Adrenal gland (tissue), 19 donors: ENCODE measurements at regions of chr20 and their contacts with region 1.

Region 1: DNA sequence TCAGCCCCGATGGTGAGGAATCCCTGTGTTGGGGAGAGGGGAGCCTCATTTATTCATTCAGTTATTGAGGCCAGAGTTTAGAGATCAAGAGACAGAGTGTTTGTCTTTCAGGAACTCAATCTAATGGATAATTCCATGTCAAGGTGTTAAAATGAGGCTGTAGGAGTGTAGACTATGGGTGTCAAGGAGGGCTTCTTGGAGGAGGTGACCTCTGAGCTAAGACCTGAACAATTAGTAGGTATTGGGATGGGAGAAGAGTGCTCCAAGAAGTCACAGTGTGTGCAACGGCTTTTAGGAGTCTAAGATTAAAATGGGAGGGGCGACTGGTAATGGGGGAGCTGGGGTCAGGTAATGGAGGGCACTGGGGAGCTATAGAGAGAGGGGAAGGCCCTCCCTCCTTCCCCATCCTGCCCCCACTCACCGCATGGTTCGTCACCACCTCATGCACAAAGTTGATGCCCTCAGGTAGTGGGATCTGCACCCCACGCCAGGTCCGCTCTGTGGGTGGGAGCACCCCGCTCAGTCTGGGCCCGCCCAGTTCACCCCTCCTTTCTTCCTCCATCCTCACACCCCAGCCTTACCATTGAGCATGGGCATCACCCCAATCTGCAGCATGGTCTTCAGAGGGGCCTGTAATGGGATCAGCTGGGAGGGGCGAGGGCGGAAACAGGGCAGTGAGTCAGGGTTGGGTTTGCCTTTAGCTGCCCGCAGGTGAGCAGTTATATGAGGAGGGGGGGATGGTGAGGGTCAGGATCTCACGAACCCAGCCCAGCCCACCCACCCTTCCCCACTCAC is 8.1 kb downstream of the CTSA start:
- DNase-seq: no peak
- H3K4me3 ChIP-seq: no peak overlapping the region
- H3K27ac ChIP-seq: no peak overlapping the region
- H3K4me1 ChIP-seq: peaks cover 0 to 5% of the 10 kb centered on the region in 2 donors
- H3K27me3 ChIP-seq: no peaks in the 10 kb centered on the region
- CTCF ChIP-seq: no peak
- POLR2A ChIP-seq: no peak

Region 2: DNA sequence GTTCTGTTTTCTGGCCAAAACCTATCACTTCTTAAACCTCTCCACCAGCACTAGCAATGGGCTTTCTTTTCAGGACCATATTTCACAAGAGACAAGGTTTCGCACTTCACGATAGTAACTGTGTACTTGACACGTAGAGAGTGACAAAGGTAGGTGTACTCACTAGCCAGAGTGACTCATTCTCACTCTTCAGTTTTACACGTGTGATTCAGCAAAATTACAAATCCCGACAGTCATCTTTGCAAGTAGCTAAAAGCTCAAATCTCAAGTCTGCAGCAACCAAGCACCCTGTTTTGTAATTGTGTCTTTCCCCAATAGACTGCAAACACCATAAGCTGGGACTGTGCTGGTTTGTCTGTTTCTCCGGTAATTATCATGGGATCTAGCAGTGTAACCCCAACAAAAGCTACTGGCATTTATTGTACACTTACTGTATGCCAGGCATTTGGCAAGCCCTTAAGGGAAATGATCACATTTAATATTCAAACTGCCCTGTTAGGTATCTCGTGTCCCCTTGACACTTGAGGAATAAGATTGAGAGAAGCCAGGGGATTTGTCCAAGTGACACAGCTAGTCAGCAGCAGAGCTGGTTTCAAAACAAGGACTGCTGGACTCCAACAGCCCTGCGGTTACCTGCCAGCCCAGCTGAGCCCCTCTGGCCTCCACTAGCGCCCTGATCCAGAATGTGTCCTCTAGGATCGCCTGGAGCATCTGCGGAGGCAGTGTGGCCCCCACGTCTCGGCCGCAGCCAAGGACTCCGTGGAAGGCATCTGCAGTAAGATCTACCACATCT is 45.1 kb after region 1 on chr20:
- intact Hi-C with region 1: loop called in 1 of 2 experiments (anchors 5 kb)
- DNase-seq: peak in 1 of 7 donors; percentile 4
- H3K4me3 ChIP-seq: no peak overlapping the region
- H3K27ac ChIP-seq: peak overlapping the region in 3 of 5 donors; percentile 90 to 96 (median 91)
- H3K4me1 ChIP-seq: peaks cover 25% of the 10 kb centered on the region in 2 donors
- H3K27me3 ChIP-seq: no peaks in the 10 kb centered on the region
- CTCF ChIP-seq: no peak
- POLR2A ChIP-seq: no peak

Region 3: DNA sequence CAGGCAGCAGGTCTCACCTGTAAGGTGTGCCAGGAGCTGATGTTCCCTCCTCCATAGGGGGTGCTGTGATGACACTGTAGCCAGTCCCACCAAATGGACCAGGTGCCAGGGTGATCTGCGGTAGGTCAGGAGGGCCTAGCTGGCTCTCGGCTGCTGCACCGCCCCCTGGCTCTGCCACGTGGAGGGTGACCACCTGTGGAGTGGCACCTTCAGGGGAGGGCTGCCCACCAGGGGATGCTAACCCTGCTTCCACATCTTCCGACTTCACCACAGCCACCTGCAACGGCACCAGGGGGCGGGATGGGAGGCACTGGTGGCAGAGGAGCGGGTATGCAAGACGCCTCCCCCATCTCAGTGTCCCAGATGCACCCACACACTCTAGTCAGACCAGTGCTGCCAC is 54.4 kb after region 1 on chr20:
- intact Hi-C with region 1: loop called in 1 of 2 experiments (anchors 5 kb)
- DNase-seq: peak in 3 of 7 donors; percentile 7 to 30 (median 17)
- H3K4me3 ChIP-seq: no peak overlapping the region
- H3K27ac ChIP-seq: no peak overlapping the region
- H3K4me1 ChIP-seq: no peaks in the 10 kb centered on the region
- H3K27me3 ChIP-seq: no peaks in the 10 kb centered on the region
- CTCF ChIP-seq: no peak
- POLR2A ChIP-seq: no peak

Region 4: GRCh38 chr20:46089417-46090388 is 190.5 kb after region 1 on chr20 and contains the start of gene NCOA5:
- intact Hi-C with region 1: no loop called
- DNase-seq: peak; percentile 96 to 97 (median 96)
- H3K4me3 ChIP-seq: peak within 1 kb of the TSS; percentile 39 to 99 (median 68)
- H3K27ac ChIP-seq: peak within 1 kb of the TSS; percentile 93 to 100 (median 99)
- H3K4me1 ChIP-seq: peaks cover 29 to 49% of the 10 kb centered on the region in 2 donors
- H3K27me3 ChIP-seq: no peaks in the 10 kb centered on the region
- CTCF ChIP-seq: peak in 2 of 6 experiments; percentile 3 to 30
- POLR2A ChIP-seq: peak; percentile 83 to 91
- total RNA-seq, gene NCOA5: 17.8 to 44.8 (median 25.9) TPM